WTC11 (cell line): ENCODE measurements at regions of chr10 and their contacts with region 1.

Region 1: GRCh38 chr10:78258323-78259030 is 224.8 kb downstream of the RPS24 start:
- DNase-seq: no peak
- ATAC-seq: peak; percentile 55; the same call in 1 of the 2 replicates
- H3K4me3 Mint-ChIP-seq: no peak overlapping the region
- H3K27ac Mint-ChIP-seq: no peak overlapping the region
- H3K4me1 Mint-ChIP-seq: no peaks in the 10 kb centered on the region
- H3K27me3 Mint-ChIP-seq: peaks cover 4% of the 10 kb centered on the region; the same call in 1 of the 2 replicates
- CTCF ChIP-seq: no peak

Region 2: GRCh38 chr10:78212060-78212785 is 46.3 kb before region 1 on chr10:
- CTCF ChIA-PET with region 1: no interaction called
- POLR2A ChIA-PET with region 1: no interaction called
- DNase-seq: no peak
- ATAC-seq: no peak
- H3K4me3 Mint-ChIP-seq: no peak overlapping the region
- H3K27ac Mint-ChIP-seq: peak overlapping the region; percentile 2; the same call in 1 of the 2 replicates
- H3K4me1 Mint-ChIP-seq: peaks cover 7% of the 10 kb centered on the region
- H3K27me3 Mint-ChIP-seq: no peaks in the 10 kb centered on the region
- CTCF ChIP-seq: no peak

Region 3: DNA sequence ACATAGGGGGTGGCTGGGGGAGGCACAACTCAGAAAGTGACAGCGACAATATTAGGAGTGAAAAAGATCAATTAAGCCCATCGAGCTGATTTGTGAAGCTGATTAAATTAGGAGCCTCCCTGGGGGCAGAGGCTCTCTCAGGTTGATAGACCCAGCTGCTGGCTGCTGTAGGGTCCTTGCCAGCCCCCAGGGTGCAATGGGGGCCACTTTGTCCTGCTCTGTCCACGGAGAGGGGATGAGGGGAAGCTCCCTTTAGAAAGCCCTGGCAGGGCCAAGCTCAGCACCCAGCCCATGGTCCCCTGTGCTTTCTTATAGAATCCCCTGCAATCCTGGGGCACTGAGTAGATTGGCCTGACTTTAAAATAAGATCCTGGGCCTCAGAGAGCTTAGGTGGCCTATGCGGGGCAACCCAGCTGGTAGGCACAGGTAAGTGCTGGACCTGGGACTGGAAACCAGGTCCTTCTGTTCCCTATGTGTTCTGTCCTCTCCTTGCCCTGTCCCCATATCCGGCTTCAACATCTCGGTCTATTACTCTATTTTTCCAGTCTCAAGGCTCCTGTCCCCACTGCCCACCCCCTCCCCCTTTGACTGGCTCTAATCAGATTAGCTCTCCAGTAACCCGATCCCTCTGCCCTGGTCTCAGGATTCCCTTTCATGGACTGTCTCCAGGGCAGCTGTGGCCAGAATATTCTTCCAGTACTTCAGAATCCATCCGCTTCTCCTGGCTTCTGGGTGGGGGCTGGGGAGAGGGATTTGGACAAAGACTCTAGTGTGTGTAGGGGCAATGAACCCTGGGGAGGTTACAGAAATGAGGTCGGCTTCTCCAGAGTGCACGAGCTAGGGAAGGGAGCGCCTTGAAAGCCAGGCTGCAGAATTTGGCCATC is 34.7 kb after region 1 on chr10:
- CTCF ChIA-PET with region 1: interaction called, 16 read pairs
- POLR2A ChIA-PET with region 1: no interaction called
- DNase-seq: peak; percentile 39
- ATAC-seq: peak; percentile 86
- H3K4me3 Mint-ChIP-seq: 0 out of 2 replicates have a peak overlapping the region, but pooled peaks have one; percentile 36
- H3K27ac Mint-ChIP-seq: peak overlapping the region; percentile 36; the same call in 1 of the 2 replicates
- H3K4me1 Mint-ChIP-seq: peaks cover 32% of the 10 kb centered on the region
- H3K27me3 Mint-ChIP-seq: no peaks in the 10 kb centered on the region
- CTCF ChIP-seq: no peak

Region 4: DNA sequence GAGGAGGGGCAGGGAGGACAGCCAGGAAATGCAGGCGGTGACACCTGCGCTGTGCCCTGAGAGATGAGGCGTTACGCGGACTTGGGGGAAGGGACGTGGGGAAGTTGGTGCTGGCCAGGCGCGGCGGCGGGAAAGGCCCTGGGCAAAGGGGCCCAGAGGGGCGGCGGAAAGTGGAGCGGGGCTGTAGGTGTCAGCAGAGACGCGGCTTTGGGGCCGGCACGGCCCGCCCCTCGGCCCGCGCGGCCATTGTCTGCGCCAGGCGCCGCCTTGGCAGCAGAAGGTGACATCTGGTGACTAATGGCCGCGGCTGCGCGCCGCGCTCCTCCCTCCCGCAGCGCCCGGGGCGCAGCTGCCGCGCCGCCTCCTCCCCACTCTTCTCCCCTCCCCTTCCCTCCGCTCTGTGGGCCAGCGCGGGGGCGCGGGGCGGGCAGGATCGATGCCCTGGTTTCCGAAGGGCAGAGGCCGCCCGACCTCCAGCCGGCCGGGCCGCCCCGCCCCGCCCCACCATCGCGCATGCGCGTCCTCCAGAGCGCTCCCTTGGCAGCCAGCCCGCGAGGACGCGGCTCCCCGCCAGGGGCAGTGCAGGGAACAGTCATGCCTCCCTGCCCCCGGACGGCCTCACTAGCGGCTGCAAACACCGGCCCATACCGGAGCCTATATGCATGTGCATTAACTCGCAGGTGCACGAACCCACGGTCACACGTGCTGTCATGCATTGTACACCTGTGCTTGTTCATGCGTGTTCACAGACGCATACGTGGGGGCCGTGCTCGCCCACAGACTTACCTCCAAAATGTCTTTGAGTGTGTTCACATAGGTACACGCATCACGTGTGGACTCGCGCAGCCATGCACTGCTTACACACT is 44.7 kb after region 1 on chr10:
- CTCF ChIA-PET with region 1: interaction called, 41 read pairs
- POLR2A ChIA-PET with region 1: no interaction called
- DNase-seq: peak; percentile 96
- ATAC-seq: peak; percentile 91
- H3K4me3 Mint-ChIP-seq: peak overlapping the region; percentile 82
- H3K27ac Mint-ChIP-seq: peak overlapping the region; percentile 85
- H3K4me1 Mint-ChIP-seq: peaks cover 31% of the 10 kb centered on the region
- H3K27me3 Mint-ChIP-seq: no peaks in the 10 kb centered on the region; the same call in 1 of the 2 replicates
- CTCF ChIP-seq: peak; percentile 53

Region 5: DNA sequence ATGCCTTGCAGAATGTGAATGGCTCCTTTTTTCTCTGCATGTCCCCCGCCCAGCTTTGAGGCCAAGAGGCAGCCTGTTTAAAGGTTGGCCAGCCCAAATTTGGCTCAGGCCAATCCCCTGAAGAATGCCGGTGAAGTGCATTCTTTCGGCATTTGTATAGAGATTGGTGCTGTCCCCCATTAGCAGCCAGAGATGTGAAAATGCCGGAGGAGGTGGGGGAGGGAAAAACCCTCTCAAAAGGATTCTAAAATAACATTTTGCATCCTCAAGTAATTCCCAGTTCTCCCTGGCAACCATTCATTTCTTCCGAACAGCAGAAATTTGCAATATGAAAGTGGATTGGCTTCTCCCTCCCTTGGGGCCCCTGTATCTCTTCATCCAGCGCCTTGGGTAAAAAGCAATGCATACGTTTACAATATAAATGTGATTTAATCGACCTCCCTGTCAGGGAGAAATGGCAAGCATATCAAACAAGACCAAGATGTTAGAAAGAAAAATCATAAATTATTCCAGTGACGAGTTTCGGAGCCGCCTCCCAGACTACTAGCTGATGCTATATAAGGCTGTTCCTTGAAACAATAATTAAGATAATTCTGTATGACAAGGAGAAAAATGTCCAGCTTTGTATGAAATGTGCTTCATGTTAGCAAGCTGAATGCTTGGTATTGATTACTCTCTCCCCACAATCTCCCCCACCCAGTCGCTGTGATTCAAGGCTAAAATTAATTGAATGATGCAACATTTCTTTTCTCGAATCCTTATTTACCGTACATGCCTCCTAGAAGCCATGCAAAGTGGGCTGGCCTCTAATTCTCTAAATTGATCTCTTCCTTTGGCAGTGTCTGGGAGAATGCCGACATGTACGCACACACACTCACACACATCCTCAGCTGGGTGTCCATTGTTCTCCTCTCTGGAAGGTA is 98.9 kb after region 1 on chr10:
- CTCF ChIA-PET with region 1: no interaction called
- POLR2A ChIA-PET with region 1: no interaction called
- DNase-seq: peak; percentile 41
- ATAC-seq: peak; percentile 91
- H3K4me3 Mint-ChIP-seq: no peak overlapping the region
- H3K27ac Mint-ChIP-seq: peak overlapping the region; percentile 21; the same call in 1 of the 2 replicates
- H3K4me1 Mint-ChIP-seq: peaks cover 37% of the 10 kb centered on the region
- H3K27me3 Mint-ChIP-seq: peaks cover 8% of the 10 kb centered on the region
- CTCF ChIP-seq: no peak